BJ (cell line): ENCODE measurements at regions of chr7 and their contacts with region 1.

Region 1: GRCh38 chr7:76220185-76221057 is 18.7 kb downstream of the SRRM3 start:
- DNase-seq: no peak
- H3K4me3 ChIP-seq: no peak overlapping the region
- H3K27me3 ChIP-seq: peaks cover 2% of the 10 kb centered on the region
- CTCF ChIP-seq: peak; percentile 17; the same call in 1 of the 2 replicates

Region 2: GRCh38 chr7:76142861-76143260 is 77.6 kb before region 1 on chr7:
- CTCF ChIA-PET with region 1: no interaction called
- POLR2A ChIA-PET with region 1: no interaction called
- DNase-seq: no peak
- H3K4me3 ChIP-seq: no peak overlapping the region
- H3K27me3 ChIP-seq: peaks cover 7% of the 10 kb centered on the region
- CTCF ChIP-seq: no peak

Region 3: DNA sequence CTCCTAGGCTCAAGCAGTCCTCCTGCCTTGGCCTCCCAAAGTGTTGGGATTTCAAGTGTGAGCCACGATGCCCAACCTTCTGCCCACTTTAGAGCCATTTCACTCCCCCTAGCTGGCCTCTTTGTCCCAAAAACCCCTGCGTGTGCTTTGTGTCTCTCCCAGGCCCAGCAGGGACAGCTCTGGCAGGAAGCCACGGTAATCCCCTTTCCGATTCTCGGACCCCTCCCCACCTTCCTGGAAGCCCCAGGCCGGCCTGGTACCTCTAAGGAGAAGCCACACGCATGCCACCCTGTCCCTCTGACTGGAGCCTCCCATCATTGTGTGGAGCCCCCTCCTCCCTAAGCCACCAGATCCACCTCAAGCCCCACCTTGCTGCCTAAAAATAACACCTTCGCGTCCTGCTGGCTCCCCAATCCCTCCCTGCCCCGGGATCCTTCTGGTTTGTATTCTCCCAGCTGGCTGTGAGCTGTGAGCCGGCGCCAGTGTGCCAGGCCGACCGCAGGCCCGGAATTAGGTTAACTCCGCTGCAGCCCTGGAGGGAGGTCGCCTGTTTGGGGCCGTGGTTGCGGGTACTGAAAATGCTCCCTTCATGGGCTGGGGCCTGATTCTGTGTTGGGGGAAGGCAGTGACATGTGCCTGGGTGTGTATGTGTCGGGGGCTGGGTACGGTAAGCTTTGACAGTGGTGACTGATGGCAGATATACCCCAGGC is 35.1 kb before region 1 on chr7:
- CTCF ChIA-PET with region 1: no interaction called
- POLR2A ChIA-PET with region 1: interaction called, 13 read pairs
- DNase-seq: no peak
- H3K4me3 ChIP-seq: no peak overlapping the region
- H3K27me3 ChIP-seq: no peaks in the 10 kb centered on the region
- CTCF ChIP-seq: no peak

Region 4: DNA sequence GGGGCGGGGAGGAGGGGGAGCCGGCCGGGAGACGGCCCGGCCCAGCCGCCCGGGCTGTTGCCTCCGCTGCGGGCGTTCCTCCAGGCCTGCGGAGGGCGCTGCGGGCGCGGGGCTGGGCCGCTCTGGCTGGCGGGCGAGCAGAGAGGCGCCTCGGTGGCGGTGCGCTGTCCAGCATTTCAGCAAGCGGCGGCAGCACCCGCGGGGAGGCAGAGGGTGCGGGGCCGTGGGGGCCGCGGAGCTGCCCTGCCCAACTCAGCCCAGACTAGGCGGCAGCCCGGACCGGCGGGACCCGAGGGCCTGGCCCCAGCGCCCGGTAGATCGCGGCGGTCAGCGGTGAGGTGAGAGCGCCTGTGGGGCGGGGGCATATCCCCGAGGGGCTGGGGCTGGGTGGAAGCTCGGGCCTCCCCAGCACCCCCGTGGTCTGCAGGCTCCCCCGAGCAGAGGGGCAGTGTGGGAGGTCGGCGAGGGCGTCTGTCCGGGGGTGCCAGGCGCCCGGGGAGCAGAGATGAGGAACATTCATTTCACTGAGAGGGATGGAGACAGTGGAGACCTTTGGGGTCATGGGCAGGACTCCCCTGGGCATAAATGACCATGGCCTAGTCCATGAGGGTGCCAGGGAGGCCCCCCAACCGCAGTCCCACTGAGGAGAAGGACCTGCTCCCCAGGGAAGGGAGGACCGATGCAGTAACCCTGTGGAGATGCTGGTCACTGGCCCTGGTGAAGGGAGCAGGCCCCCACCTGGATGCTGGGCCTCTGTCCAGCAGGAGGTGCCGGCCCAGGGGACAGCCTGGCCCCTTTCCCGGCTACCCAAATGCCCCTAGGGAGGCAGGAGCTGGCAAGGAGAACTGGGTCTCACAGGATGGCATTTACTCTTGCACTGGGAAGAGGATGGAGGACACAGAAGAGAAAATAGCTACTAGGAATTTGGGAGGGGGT is 18.4 kb before region 1 on chr7 and contains the start of gene SRRM3:
- CTCF ChIA-PET with region 1: interaction called, 13 read pairs
- POLR2A ChIA-PET with region 1: no interaction called
- DNase-seq: no peak
- H3K4me3 ChIP-seq: no peak within 1 kb of the TSS
- H3K27me3 ChIP-seq: no peaks in the 10 kb centered on the region
- CTCF ChIP-seq: peak; percentile 28; the same call in 1 of the 2 replicates
- polyA plus RNA-seq, gene SRRM3: 0.48 and 0.80 TPM in 2 replicates